A549 (cell line): ENCODE measurements at regions of chr13 and their contacts with region 1.

Region 1: DNA sequence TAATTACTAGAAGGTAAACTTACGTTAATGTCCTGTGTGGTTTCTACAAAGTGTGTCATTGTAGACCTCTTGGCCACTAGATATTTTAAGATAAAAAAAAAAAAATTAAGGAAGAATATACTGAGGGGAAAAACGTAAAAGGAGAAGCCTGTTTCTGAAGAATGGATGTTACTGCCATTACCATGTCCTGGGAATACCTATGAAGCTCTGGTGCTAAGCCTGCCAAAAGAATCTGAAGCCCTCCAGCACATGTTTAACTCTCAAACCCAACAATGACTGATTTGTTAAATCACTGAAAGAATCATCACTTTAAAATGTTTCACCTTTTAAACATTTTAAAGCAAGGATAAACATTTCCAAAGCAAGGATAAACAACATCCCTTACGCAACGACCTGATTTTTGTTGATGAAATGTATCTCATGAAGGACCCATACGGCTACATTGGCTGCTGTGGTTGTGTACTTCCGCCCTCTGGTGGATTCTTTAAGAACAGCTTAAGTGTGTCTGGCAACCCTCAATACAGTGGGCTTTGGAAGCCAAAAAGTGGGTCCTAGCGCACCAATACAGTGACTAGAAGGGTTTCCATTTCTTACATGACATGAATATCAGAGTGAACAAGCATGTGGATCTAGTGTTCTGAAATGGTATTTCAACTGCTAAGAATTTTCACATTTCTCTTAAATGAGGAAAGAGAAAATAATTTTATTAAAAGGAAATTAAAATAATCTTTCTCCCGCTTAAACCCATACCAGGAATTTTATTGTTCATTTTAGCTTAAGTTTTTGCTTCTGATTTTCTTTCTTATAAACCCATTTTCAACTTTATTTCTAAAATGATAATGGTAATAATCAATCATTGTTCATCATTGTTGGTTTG is 74.5 kb upstream of the RAP2A start:
- DNase-seq: peak; percentile 40 to 74
- ATAC-seq: peak; percentile 89 to 96
- H3K4me3 ChIP-seq: no peak overlapping the region
- H3K27ac ChIP-seq: peak overlapping the region in 1 of 2 experiments; percentile 12; a peak in 2 of 6 replicates
- H3K4me1 ChIP-seq: peaks cover 16% of the 10 kb centered on the region; the same call in 1 of the 3 replicates
- CTCF ChIP-seq: peak; percentile 76
- EP300 ChIP-seq: no peak
- POLR2A ChIP-seq: no peak
- RAD21 ChIP-seq: peak; percentile 85 to 90

Region 2: GRCh38 chr13:97124916-97125809 is 234.3 kb before region 1 on chr13:
- CTCF ChIA-PET with region 1: interaction called, 12 read pairs
- POLR2A ChIA-PET with region 1: no interaction called
- DNase-seq: peak in 1 of 2 experiments; percentile 41
- ATAC-seq: peak in 1 of 2 experiments; percentile 49; a peak in 3 of 6 replicates
- H3K4me3 ChIP-seq: no peak overlapping the region
- H3K27ac ChIP-seq: peak overlapping the region; percentile 35 to 63; a peak in 5 of 6 replicates
- H3K4me1 ChIP-seq: peaks cover 63% of the 10 kb centered on the region
- CTCF ChIP-seq: no peak
- EP300 ChIP-seq: no peak
- POLR2A ChIP-seq: no peak
- RAD21 ChIP-seq: no peak